ENCODE measurements at regions of chr20 and their contacts with region 1.

Region 1: DNA sequence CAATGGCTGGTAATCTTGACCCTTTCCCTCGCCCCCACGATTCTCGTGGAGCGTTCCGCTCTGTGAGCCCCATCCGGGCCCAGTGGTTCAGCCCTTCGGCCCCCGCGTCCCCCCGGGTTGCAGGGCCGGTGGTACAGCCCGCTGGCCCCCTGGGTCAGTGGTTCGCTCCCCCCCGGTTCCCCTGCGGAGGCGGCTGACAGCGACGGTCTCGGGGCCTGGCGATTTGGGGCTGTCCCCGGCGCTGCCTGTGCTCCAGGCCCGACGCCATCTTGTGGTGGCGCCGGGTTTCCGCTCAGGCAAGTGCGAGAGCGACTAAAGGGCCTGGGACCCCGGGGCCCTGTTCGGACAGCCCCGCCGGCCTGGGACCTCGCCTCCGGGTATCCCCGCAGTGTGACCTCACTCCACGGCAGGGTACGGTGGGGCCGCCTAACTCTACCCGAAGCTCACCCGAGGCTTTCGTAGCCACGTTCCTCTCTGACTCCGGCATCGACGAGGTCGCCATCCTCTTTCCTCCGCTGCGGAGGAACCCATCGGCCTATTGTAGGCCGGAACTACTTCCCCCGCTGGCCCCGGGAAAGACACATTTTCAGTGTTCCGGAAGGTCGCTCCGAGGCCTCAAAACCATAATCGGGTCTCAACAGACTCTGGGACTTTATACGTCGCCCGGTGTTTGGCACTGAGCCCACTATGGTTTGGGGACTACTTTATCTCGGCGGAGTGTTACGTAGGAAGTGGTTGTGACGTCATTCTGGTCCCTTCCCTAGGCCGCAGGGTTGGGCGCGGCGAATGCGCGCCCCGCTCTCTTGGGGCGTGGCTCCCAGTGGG is at the start of gene ZNF335:
- DNase-seq: peak; percentile 99 to 100
- H3K4me3 ChIP-seq: peak within 1 kb of the TSS; percentile 54
- H3K4me3 Mint-ChIP-seq: peak within 1 kb of the TSS; percentile 80
- H3K27ac Mint-ChIP-seq: peak within 1 kb of the TSS; percentile 81
- H3K4me1 ChIP-seq: peaks cover 7% of the 10 kb centered on the region; the same call in 1 of the 2 replicates
- H3K4me1 Mint-ChIP-seq: peaks cover 13% of the 10 kb centered on the region
- H3K27me3 ChIP-seq: no peaks in the 10 kb centered on the region
- H3K27me3 Mint-ChIP-seq: peaks cover 5% of the 10 kb centered on the region
- CTCF ChIP-seq: peak; percentile 29 to 55
- total RNA-seq, gene ZNF335: 35.1 and 38.1 TPM in 2 replicates

Region 2: DNA sequence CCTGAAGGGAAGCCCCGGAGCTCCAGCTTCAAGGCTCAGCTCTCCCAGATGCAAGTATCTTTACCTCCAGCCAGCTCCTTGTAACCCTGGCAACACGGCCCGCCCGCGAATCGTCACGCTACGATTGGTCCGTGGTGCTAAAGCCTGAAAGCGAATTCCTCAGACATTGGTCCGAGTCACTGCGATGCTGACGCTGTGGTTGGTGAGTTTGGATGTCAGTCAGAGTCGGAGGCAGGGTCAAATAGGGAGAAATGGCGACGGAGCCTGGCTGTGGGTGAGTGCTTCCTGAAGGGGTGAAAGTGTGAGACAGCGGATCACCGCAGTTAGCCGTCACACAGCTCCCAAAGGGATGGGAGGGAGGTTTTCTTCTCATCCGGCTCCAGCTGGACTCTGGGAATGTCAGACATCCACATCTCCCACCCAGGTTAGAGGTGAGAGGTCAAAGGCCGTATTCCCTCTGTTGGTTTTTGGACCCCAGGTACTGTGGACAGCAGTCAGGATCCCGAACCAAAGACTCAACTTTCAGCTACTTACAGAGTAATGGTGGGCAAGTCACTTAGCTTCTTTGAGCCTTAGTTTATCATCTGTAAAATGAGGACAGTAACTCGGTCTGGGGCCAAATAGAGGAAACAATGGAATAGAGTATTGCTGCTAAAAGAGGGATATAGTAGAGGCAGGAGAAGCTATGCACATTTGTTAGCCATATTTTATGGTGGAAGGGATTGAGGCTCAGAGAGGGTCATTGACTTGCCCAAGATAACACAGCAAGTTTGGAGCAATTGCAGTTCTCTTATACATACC is 90.7 kb before region 1 on chr20 and contains the start of gene ZSWIM1:
- CTCF ChIA-PET with region 1: interaction called, 5 read pairs
- POLR2A ChIA-PET with region 1: interaction called, 14 read pairs
- intact Hi-C with region 1: no loop called
- DNase-seq: peak; percentile 100
- H3K4me3 ChIP-seq: peak within 1 kb of the TSS; percentile 66
- H3K4me3 Mint-ChIP-seq: peak within 1 kb of the TSS; percentile 96
- H3K27ac Mint-ChIP-seq: peak within 1 kb of the TSS; percentile 95
- H3K4me1 ChIP-seq: no peaks in the 10 kb centered on the region
- H3K4me1 Mint-ChIP-seq: peaks cover 19% of the 10 kb centered on the region
- H3K27me3 ChIP-seq: no peaks in the 10 kb centered on the region
- H3K27me3 Mint-ChIP-seq: no peaks in the 10 kb centered on the region
- CTCF ChIP-seq: no peak
- total RNA-seq, gene ZSWIM1: 24.8 and 27.3 TPM in 2 replicates

Region 3: GRCh38 chr20:45948742-45949541 is 22.9 kb before region 1 on chr20:
- CTCF ChIA-PET with region 1: interaction called, 17 read pairs
- POLR2A ChIA-PET with region 1: no interaction called
- intact Hi-C with region 1: no loop called
- DNase-seq: peak in 1 of 2 experiments; percentile 57
- H3K4me3 ChIP-seq: no peak overlapping the region
- H3K4me3 Mint-ChIP-seq: no peak overlapping the region
- H3K27ac Mint-ChIP-seq: peak overlapping the region; percentile 9
- H3K4me1 ChIP-seq: no peaks in the 10 kb centered on the region
- H3K4me1 Mint-ChIP-seq: no peaks in the 10 kb centered on the region
- H3K27me3 ChIP-seq: no peaks in the 10 kb centered on the region
- H3K27me3 Mint-ChIP-seq: no peaks in the 10 kb centered on the region
- CTCF ChIP-seq: no peak

Region 4: GRCh38 chr20:45987108-45987780 is 15.4 kb after region 1 on chr20:
- CTCF ChIA-PET with region 1: interaction called, 20 read pairs
- POLR2A ChIA-PET with region 1: interaction called, 3 read pairs
- intact Hi-C with region 1: loop called (anchors 1 kb)
- DNase-seq: peak; percentile 87 to 90
- H3K4me3 ChIP-seq: no peak overlapping the region
- H3K4me3 Mint-ChIP-seq: no peak overlapping the region
- H3K27ac Mint-ChIP-seq: no peak overlapping the region
- H3K4me1 ChIP-seq: peaks cover 8% of the 10 kb centered on the region
- H3K4me1 Mint-ChIP-seq: peaks cover 6% of the 10 kb centered on the region
- H3K27me3 ChIP-seq: no peaks in the 10 kb centered on the region
- H3K27me3 Mint-ChIP-seq: peaks cover 7% of the 10 kb centered on the region
- CTCF ChIP-seq: peak; percentile 94 to 95

Region 5: GRCh38 chr20:46089417-46090388 is 117.8 kb after region 1 on chr20 and contains the start of gene NCOA5:
- CTCF ChIA-PET with region 1: interaction called, 4 read pairs
- POLR2A ChIA-PET with region 1: interaction called, 4 read pairs
- intact Hi-C with region 1: loop called (anchors 1 kb)
- DNase-seq: peak; percentile 99 to 100
- H3K4me3 ChIP-seq: peak within 1 kb of the TSS; percentile 94
- H3K4me3 Mint-ChIP-seq: peak within 1 kb of the TSS; percentile 83
- H3K27ac Mint-ChIP-seq: peak within 1 kb of the TSS; percentile 87
- H3K4me1 ChIP-seq: peaks cover 28% of the 10 kb centered on the region
- H3K4me1 Mint-ChIP-seq: peaks cover 36% of the 10 kb centered on the region
- H3K27me3 ChIP-seq: no peaks in the 10 kb centered on the region
- H3K27me3 Mint-ChIP-seq: peaks cover 3% of the 10 kb centered on the region
- CTCF ChIP-seq: peak; percentile 48 to 52
- total RNA-seq, gene NCOA5: 52.5 and 53.3 TPM in 2 replicates

Region 6: GRCh38 chr20:46243707-46244628 is 272.1 kb after region 1 on chr20:
- CTCF ChIA-PET with region 1: no interaction called
- POLR2A ChIA-PET with region 1: no interaction called
- intact Hi-C with region 1: no loop called
- DNase-seq: no peak
- H3K4me3 ChIP-seq: no peak overlapping the region
- H3K4me3 Mint-ChIP-seq: no peak overlapping the region
- H3K27ac Mint-ChIP-seq: no peak overlapping the region
- H3K4me1 ChIP-seq: no peaks in the 10 kb centered on the region
- H3K4me1 Mint-ChIP-seq: no peaks in the 10 kb centered on the region
- H3K27me3 ChIP-seq: no peaks in the 10 kb centered on the region; the same call in 1 of the 2 replicates
- H3K27me3 Mint-ChIP-seq: peaks cover 25% of the 10 kb centered on the region
- CTCF ChIP-seq: no peak